HEK293 (cell line): ENCODE measurements at regions of chr5 and their contacts with region 1.

Region 1: DNA sequence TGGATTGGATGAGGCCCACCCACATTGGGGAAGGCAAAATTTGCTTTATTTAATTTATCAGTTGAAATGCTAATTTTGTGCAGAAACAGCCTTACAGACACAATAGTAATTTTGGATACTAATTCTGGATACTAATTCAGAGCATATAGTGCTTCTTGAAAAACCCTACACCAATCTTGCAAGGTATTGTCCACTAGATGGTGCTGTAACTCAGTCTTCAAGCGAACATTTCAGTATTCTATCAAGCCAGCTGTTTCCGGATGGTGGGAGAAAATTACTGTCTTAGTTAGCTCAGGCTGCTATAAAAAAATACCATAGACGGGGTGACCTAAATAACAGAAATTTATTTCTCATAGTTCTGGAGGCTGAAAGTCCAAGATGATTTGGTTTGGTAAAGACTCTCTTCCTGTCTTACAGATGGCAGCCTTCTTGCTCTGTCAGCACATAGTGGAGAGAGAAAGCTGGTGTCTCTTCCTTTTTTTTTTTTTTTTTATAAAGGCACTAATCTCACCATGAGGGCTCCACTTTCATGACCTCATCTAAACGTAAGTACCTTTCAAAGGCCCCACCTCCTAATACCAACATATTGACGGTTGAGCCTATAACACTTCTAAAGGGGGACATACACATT is 1306.5 kb upstream of the CDH9 start:
- H3K4me3 ChIP-seq: no peak overlapping the region
- H3K27ac ChIP-seq: no peak overlapping the region
- H3K4me1 ChIP-seq: no peaks in the 10 kb centered on the region
- CTCF ChIP-seq: no peak

Region 2: GRCh38 chr5:27928060-27928459 is 416.9 kb before region 1 on chr5:
- CTCF ChIA-PET with region 1: no interaction called
- POLR2A ChIA-PET with region 1: no interaction called
- H3K4me3 ChIP-seq: no peak overlapping the region
- H3K27ac ChIP-seq: no peak overlapping the region
- H3K4me1 ChIP-seq: no peaks in the 10 kb centered on the region
- CTCF ChIP-seq: no peak

Region 3: DNA sequence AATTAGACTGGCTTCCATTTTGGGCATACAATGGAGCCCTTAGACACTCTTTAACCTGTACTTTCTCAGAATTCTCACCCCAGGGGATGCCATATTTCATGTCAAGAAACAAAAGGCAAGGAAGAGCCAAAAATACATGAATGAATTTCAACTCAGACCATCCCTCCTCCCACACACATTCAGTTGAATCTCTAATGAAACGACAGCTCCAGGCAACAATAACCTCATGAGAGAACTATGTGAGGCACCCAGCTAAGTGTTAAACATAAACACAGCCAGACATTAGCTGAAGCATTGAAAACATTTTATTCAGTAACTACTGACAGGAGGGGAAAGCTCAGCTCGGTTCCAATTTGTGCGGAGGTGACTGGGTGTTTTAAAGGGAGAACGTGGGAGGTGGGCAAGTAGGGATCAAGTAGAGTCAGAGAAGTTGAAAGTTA is 52.6 kb after region 1 on chr5:
- CTCF ChIA-PET with region 1: interaction called, 12 read pairs
- POLR2A ChIA-PET with region 1: no interaction called
- H3K4me3 ChIP-seq: no peak overlapping the region
- H3K27ac ChIP-seq: no peak overlapping the region
- H3K4me1 ChIP-seq: no peaks in the 10 kb centered on the region
- CTCF ChIP-seq: no peak

Region 4: DNA sequence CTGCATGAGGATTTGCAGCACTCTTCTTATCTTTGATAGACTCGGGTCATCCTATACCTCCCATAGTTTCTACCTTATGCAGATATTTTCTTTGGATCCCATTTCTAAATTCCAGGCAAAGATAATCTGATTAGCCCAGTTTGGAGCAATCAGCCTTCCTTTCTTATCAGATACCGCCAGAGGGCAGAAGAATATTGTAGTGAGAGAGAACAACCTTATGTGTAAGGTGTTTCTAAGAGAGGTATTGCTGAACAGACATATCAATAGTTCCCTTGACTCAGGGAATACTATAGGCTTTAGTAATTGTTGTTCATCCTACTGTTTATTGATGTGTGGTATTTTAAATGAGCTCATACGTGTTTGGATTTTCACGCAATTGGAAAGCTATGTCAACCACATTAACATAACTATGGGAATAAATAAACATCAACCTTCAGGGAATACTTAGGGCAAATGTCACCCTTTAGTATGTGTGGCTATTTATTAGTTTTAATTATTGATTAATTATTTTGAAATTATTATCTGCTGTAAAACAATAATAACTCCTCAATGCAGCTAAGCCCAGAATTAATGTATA is 128.7 kb after region 1 on chr5:
- CTCF ChIA-PET with region 1: interaction called, 22 read pairs
- POLR2A ChIA-PET with region 1: no interaction called
- H3K4me3 ChIP-seq: no peak overlapping the region
- H3K27ac ChIP-seq: no peak overlapping the region
- H3K4me1 ChIP-seq: no peaks in the 10 kb centered on the region
- CTCF ChIP-seq: no peak

Region 5: GRCh38 chr5:28512648-28513047 is 167.7 kb after region 1 on chr5:
- CTCF ChIA-PET with region 1: no interaction called
- POLR2A ChIA-PET with region 1: no interaction called
- H3K4me3 ChIP-seq: no peak overlapping the region
- H3K27ac ChIP-seq: no peak overlapping the region
- H3K4me1 ChIP-seq: no peaks in the 10 kb centered on the region
- CTCF ChIP-seq: no peak

Region 6: GRCh38 chr5:28576022-28576421 is 231.1 kb after region 1 on chr5:
- CTCF ChIA-PET with region 1: interaction called, 24 read pairs
- POLR2A ChIA-PET with region 1: no interaction called
- H3K4me3 ChIP-seq: no peak overlapping the region
- H3K27ac ChIP-seq: no peak overlapping the region
- H3K4me1 ChIP-seq: no peaks in the 10 kb centered on the region
- CTCF ChIP-seq: no peak

Region 7: DNA sequence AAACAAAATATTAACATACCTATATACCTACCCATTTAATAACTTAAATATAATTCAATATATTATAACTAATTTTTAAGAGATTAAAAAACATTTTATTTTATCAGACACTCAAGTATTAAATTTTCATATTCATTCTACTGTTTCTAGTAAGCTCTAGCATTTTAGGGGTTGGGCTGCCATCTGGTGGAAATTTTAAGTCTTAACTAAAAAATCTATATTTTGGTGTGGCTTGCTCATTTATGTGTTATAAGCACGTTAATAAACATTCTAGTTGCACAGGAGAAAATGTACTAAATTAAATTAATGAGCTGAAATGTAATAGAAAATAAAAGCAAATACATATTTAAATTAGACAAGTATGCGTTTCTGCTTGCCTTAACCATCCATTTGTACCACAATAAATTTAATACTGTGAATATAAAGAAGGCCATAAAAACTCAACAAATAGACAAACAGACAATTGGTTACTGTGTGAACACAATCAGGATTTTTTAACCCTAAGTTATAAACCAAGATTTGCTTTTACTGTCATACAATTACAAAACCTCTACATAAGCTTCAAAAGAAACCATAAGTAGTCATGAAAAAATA is 421.7 kb after region 1 on chr5:
- CTCF ChIA-PET with region 1: interaction called, 30 read pairs
- POLR2A ChIA-PET with region 1: no interaction called
- H3K4me3 ChIP-seq: no peak overlapping the region
- H3K27ac ChIP-seq: no peak overlapping the region
- H3K4me1 ChIP-seq: no peaks in the 10 kb centered on the region
- CTCF ChIP-seq: no peak